Kidney (tissue), 22 donors: ENCODE measurements at regions of chr11 and their contacts with region 1.

Region 1: DNA sequence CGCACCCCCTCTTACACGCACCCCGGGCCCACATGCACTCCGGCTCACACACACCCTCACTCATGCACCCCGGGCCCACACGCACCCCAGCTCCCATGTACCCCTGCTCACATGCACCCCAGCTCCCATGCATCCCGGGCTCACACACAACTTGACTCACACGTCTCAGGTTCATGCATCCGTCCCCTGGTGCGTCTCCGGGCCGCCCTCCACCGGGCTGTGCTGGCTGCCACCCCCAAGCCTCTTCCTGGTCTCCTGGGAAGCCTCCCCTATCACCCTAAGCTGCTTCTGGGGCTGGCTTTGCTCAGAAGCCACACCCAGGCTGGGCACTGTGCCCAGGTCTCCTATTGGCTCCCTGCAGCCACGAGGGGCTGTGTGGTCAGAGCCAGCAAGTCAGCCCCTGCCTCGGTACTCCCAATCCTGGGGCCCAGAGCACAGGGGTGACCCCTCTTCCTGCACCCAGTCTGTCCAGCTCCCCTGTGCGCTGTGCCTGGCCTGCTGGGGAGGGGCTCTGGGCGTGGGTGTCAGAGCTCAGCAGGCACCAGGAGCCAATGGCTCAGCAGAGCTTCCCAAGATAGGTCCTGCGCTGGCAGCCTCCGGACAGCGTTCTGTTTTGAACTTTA is 17.0 kb downstream of the TSPAN4 start:
- DNase-seq: peak; percentile 59 to 95 (median 75)
- H3K4me3 ChIP-seq: no peak overlapping the region
- H3K27ac ChIP-seq: no peak overlapping the region
- H3K4me1 ChIP-seq: peaks cover 0 to 32% (median 13%) of the 10 kb centered on the region in 3 donors
- H3K27me3 ChIP-seq: no peaks in the 10 kb centered on the region
- CTCF ChIP-seq: no peak

Region 2: DNA sequence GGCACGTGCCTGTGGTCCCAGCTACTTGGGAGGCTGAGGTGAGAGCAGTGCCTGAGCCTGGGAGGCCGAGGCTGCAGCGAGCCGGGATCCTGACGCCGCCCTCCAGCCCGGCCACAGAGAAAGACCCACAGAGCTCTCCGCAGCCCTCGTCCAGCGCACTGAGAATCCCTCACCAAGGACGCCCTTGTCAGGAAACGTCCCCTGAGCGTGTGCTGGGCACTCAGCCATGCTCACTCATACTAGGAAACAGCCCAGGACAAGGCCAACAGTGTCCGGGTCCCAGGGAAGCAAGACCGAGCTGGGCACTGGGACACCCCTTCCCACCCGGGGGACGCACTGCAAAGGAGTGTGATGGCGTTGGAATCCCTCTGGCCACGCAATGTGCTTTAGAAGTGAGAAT is 179.1 kb before region 1 on chr11:
- intact Hi-C with region 1: no loop called
- DNase-seq: no peak
- H3K4me3 ChIP-seq: no peak overlapping the region
- H3K27ac ChIP-seq: no peak overlapping the region
- H3K4me1 ChIP-seq: peaks cover 0 to 2% (median 0%) of the 10 kb centered on the region in 3 donors
- H3K27me3 ChIP-seq: no peaks in the 10 kb centered on the region
- CTCF ChIP-seq: no peak

Region 3: GRCh38 chr11:1049431-1049891 is 189.8 kb after region 1 on chr11:
- intact Hi-C with region 1: loop called (anchors 10 kb)
- DNase-seq: peak in 2 of 5 donors; percentile 36 to 68
- H3K4me3 ChIP-seq: no peak overlapping the region
- H3K27ac ChIP-seq: no peak overlapping the region
- H3K4me1 ChIP-seq: peaks cover 0 to 2% (median 0%) of the 10 kb centered on the region in 3 donors
- H3K27me3 ChIP-seq: no peaks in the 10 kb centered on the region
- CTCF ChIP-seq: no peak